GM10248 (cell line): ENCODE measurements at regions of chr18 and their contacts with region 1.

Region 1: DNA sequence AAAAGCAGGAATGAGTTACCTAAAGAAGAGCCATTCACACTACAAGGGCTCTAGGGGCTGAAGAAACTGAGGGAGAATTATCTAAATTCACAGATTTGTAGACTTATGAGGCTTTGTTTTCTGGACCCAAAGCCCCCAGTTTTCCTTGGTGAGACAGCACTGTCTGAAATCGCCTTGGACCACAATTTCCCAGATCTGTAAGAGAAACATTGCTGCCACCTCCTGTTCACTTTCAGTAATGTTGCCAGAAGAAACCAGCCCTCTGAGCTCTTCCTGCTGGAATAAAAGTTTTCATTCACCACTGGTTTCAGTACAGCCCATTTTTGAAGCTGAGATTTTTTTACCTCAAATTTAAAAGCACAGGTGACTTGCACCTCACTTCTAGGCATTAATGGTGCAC is 169.2 kb downstream of the CDH20 start:
- DNase-seq: peak; percentile 39
- CTCF ChIP-seq: peak; percentile 60

Region 2: GRCh38 chr18:61322265-61322873 is 180.1 kb before region 1 on chr18:
- CTCF ChIA-PET with region 1: interaction called, 209 read pairs
- POLR2A ChIA-PET with region 1: no interaction called
- DNase-seq: peak; percentile 65
- CTCF ChIP-seq: peak; percentile 89

Region 3: DNA sequence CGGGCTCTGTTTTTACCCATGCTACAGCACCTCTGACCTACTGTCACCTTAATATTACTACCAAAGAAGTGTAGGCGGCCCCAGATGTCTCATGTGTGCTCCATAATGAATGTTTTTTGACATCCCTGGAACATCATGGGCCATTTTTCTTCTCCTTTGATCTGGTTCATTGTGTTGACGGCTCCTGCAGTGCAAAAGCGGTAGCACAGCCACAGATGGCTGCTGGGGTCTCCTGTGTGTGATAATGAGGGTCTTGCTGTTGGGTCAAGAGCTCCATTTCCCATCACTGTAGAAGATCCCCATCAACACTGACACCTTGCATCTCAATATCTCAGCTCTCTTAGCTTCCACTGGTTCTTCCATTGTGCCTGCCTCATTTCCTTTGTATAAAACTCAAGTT is 74.2 kb before region 1 on chr18:
- CTCF ChIA-PET with region 1: no interaction called
- POLR2A ChIA-PET with region 1: no interaction called
- DNase-seq: no peak
- CTCF ChIP-seq: no peak

Region 4: GRCh38 chr18:61489334-61489733 is 13.1 kb before region 1 on chr18:
- CTCF ChIA-PET with region 1: interaction called, 15 read pairs
- POLR2A ChIA-PET with region 1: no interaction called
- DNase-seq: no peak
- CTCF ChIP-seq: no peak

Region 5: DNA sequence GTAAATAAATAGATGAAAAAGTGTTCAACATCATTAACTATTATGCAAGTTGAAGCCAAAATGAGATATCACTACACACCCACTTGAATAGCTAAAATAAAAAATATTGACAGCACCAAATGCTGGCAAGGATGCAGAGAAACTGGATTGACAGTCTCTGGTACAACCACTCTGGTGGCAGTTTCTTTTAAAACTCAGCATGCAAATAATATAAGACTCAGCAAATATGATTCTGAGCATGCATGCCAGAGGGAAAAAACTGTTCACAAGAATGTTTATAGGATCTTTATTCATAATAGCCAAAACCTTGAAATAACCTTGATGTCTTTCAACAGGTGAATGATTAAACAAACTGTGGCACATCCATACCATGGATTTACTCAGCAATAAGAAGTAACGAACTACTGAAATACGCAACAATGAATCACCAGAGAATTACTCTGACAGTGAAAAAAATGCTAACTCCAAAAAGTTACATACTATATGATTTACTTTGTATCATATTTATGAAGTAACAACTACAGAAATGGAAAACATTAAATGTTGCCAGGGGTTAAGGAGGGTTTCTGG is 552.5 kb after region 1 on chr18:
- CTCF ChIA-PET with region 1: no interaction called
- POLR2A ChIA-PET with region 1: no interaction called
- DNase-seq: no peak
- CTCF ChIP-seq: no peak